Left ventricle myocardium superior (tissue), 1 donor: ENCODE measurements at regions of chr7 and their contacts with region 1.

Region 1: DNA sequence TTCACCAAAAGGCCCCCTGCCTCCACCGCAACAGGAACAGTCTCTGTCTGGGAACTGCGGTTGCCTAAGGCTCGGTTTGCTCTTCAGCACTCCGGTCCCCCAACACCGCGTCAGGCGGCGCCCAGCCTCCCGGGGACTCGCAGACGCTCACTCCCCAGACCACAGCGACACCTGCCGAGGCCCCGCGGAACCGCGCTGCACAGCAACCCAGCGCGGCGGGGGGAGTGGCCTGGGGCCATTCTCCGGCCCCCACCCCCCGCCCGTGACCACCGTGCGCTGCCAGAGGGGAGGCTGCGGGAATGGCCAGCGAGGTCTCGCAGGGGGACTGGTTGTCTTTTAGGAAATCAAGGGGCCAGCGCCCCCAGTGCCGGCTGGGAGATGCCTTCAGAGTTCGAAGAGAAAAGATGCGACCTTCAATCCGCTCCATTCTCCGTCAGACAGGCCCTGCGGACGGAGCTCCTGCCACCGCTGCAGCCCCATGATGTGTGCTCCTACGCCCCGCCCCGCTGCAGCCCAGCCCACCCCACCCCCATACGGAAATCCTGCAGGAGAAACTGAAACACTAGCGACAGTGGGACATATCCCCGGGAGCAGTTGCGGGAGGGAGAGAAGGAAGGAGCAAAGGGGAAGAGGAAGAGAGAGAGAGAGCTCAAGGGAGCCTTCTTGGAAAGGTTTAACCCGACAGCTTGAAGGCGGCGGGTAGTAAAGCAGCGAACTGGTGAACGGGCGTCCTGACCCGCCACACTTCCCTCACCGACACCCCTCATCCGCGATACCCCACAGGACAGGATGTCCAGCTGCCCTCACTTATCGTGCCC is 137.4 kb upstream of the CDCA7L start:
- DNase-seq: peak; percentile 94
- ATAC-seq: peak; percentile 99

Region 2: DNA sequence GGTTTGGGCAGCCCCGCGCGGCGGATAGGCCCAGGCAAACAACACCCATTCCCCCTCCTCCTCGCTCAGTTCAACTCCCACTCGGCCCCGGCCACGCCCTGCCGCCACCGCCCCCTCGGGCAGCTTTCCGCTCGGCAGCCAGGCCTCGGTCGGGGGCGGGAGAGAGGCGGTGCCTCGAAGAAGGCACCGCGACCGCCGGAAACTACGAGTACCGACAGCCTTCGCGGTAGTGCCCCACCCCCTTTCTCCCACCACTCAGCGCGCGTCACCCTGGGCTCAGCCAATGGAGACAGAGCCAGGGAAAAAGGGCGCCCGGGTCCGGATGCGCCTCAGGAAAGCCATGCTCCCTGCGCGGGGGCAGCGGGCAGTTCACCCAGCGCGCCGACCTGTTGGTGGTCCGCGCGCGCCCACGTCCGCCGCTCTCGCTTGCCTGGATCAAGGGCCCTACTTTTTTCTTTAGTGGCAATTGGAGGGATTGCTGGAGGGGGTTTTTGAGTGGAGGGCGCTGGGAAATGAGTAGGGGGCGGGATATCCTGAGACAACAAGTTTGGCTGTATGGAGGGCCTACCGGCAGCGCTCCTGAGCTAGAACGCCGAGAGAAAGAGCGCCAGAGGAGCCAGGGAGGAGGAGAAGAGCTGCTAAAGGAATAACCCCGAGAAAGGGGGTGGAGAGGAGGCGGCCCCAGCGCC is 655.8 kb before region 1 on chr7:
- intact Hi-C with region 1: loop called (anchors 10 kb)
- DNase-seq: peak; percentile 99
- ATAC-seq: peak; percentile 92

Region 3: GRCh38 chr7:22016507-22016906 is 66.6 kb before region 1 on chr7:
- intact Hi-C with region 1: no loop called
- DNase-seq: no peak
- ATAC-seq: no peak

Region 4: GRCh38 chr7:22278660-22279059 is 195.6 kb after region 1 on chr7:
- intact Hi-C with region 1: no loop called
- DNase-seq: no peak
- ATAC-seq: no peak